ENCODE measurements at regions of chr11 and their contacts with region 1.

Region 1: DNA sequence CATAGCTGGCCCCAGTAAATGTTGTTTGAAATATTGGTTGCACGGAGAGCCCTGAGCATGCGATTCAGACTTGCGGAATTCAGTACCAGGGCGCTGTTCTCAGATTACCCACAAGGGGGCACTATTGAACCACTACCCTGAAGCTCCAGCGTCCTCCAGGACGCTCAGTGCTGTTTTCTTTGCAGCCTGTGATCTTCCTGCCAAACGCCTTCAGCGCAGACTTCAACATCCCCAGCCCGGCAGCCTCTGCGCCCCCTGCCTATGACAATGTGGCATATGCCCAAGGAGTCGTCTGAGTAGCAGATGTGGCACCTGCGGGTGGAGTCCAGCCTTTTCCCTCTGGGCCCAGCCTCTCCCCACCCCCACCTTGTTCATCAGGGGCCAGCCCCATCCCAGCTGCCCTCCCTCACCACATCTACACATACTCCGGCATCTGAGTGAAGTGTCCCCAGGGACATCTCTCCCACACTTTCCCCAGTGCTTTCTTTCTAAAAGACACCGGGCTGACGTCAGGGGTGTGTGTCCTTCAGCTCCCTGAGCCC is 9.6 kb upstream of the MS4A10 start:
- DNase-seq: peak; percentile 65 to 90 (median 84)
- ATAC-seq: peak; percentile 98
- H3K4me3 ChIP-seq: no peak overlapping the region
- H3K4me3 Mint-ChIP-seq: peak overlapping the region; percentile 13
- H3K27ac ChIP-seq: no peak overlapping the region
- H3K27ac Mint-ChIP-seq: peak overlapping the region; percentile 18
- H3K4me1 ChIP-seq: peaks cover 4% of the 10 kb centered on the region
- H3K4me1 Mint-ChIP-seq: peaks cover 10% of the 10 kb centered on the region
- H3K27me3 ChIP-seq: no peaks in the 10 kb centered on the region
- H3K27me3 Mint-ChIP-seq: peaks cover 3% of the 10 kb centered on the region
- CTCF ChIP-seq: peak; percentile 81

Region 2: GRCh38 chr11:60762851-60763691 is 12.4 kb before region 1 on chr11:
- CTCF ChIA-PET with region 1: interaction called, 13 read pairs
- POLR2A ChIA-PET with region 1: no interaction called
- intact Hi-C with region 1: no loop called
- DNase-seq: peak in 1 of 9 experiments; percentile 14
- ATAC-seq: no peak
- H3K4me3 ChIP-seq: no peak overlapping the region
- H3K4me3 Mint-ChIP-seq: no peak overlapping the region
- H3K27ac ChIP-seq: no peak overlapping the region
- H3K27ac Mint-ChIP-seq: no peak overlapping the region
- H3K4me1 ChIP-seq: no peaks in the 10 kb centered on the region
- H3K4me1 Mint-ChIP-seq: no peaks in the 10 kb centered on the region
- H3K27me3 ChIP-seq: peaks cover 0 to 2% of the 10 kb centered on the region in 2 experiments
- H3K27me3 Mint-ChIP-seq: peaks cover 46% of the 10 kb centered on the region
- CTCF ChIP-seq: no peak

Region 3: DNA sequence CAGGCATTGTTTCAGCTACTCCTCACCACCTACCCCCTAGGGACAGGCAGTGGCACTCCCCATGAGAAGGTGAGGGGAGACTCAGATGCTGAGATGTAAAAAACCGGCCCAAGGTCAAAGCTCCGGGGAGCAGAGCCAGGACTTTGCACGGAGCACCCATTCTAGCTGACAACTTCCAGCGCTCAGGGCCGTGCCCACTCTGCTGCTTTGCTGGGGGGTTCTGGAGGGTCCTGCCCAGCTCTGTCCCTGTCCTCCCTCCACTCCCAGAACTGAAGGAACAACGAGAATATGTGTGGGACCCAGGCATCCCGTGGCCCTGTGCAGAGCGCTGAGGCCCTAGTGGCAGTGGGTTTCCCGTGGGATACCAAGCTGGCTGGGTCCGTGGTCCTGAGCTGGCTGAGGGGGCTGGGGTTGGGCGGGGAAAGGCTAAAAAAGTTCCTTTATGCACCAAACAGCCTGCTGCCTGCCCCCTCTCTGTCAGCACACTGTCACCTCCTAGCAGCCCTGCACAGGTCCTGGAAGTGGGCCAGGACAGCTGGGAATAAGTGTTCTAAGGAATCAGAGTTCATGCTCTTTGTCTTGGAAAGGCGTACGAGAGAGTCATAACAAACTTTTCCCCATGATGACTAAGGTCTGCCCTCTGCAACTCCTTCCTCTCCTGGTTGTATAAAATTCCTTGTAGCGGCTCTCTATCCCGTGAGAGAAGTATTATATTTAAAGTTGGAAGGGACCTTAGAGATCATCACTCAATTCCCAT is 11.5 kb after region 1 on chr11:
- CTCF ChIA-PET with region 1: interaction called, 22 read pairs
- POLR2A ChIA-PET with region 1: no interaction called
- intact Hi-C with region 1: no loop called
- DNase-seq: no peak
- ATAC-seq: no peak
- H3K4me3 ChIP-seq: no peak overlapping the region
- H3K4me3 Mint-ChIP-seq: no peak overlapping the region
- H3K27ac ChIP-seq: no peak overlapping the region
- H3K27ac Mint-ChIP-seq: no peak overlapping the region
- H3K4me1 ChIP-seq: no peaks in the 10 kb centered on the region
- H3K4me1 Mint-ChIP-seq: no peaks in the 10 kb centered on the region
- H3K27me3 ChIP-seq: no peaks in the 10 kb centered on the region
- H3K27me3 Mint-ChIP-seq: no peaks in the 10 kb centered on the region
- CTCF ChIP-seq: no peak

Region 4: GRCh38 chr11:60872961-60873524 is 97.6 kb after region 1 on chr11:
- CTCF ChIA-PET with region 1: no interaction called
- POLR2A ChIA-PET with region 1: no interaction called
- intact Hi-C with region 1: no loop called
- DNase-seq: peak in 4 of 9 experiments; percentile 14 to 43 (median 34)
- ATAC-seq: peak; percentile 56
- H3K4me3 ChIP-seq: no peak overlapping the region
- H3K4me3 Mint-ChIP-seq: no peak overlapping the region
- H3K27ac ChIP-seq: no peak overlapping the region
- H3K27ac Mint-ChIP-seq: peak overlapping the region; percentile 32
- H3K4me1 ChIP-seq: peaks cover 47% of the 10 kb centered on the region
- H3K4me1 Mint-ChIP-seq: peaks cover 47% of the 10 kb centered on the region
- H3K27me3 ChIP-seq: no peaks in the 10 kb centered on the region
- H3K27me3 Mint-ChIP-seq: no peaks in the 10 kb centered on the region
- CTCF ChIP-seq: no peak

Region 5: GRCh38 chr11:60887556-60887955 is 112.1 kb after region 1 on chr11:
- CTCF ChIA-PET with region 1: interaction called, 6 read pairs
- POLR2A ChIA-PET with region 1: no interaction called
- intact Hi-C with region 1: loop called (anchors 2 to 5 kb)
- DNase-seq: peak in 7 of 9 experiments; percentile 33 to 66 (median 49)
- ATAC-seq: peak; percentile 82
- H3K4me3 ChIP-seq: no peak overlapping the region
- H3K4me3 Mint-ChIP-seq: no peak overlapping the region
- H3K27ac ChIP-seq: no peak overlapping the region
- H3K27ac Mint-ChIP-seq: no peak overlapping the region
- H3K4me1 ChIP-seq: no peaks in the 10 kb centered on the region
- H3K4me1 Mint-ChIP-seq: peaks cover 6% of the 10 kb centered on the region
- H3K27me3 ChIP-seq: no peaks in the 10 kb centered on the region
- H3K27me3 Mint-ChIP-seq: no peaks in the 10 kb centered on the region
- CTCF ChIP-seq: peak; percentile 52

Measured in CD8-positive, alpha-beta T cell (primary cell).